PC-3 (cell line): ENCODE measurements at regions of chr17 and their contacts with region 1.

Region 1: GRCh38 chr17:65062143-65062915 is 5.8 kb upstream of the GNA13 start:
- DNase-seq: peak; percentile 57
- ATAC-seq: peak; percentile 50
- H3K4me3 ChIP-seq: no peak overlapping the region; the same call in 1 of the 2 replicates
- H3K27ac ChIP-seq: peak overlapping the region; percentile 25
- H3K4me1 ChIP-seq: peaks cover 38% of the 10 kb centered on the region
- H3K27me3 ChIP-seq: no peaks in the 10 kb centered on the region
- CTCF ChIP-seq: no peak

Region 2: DNA sequence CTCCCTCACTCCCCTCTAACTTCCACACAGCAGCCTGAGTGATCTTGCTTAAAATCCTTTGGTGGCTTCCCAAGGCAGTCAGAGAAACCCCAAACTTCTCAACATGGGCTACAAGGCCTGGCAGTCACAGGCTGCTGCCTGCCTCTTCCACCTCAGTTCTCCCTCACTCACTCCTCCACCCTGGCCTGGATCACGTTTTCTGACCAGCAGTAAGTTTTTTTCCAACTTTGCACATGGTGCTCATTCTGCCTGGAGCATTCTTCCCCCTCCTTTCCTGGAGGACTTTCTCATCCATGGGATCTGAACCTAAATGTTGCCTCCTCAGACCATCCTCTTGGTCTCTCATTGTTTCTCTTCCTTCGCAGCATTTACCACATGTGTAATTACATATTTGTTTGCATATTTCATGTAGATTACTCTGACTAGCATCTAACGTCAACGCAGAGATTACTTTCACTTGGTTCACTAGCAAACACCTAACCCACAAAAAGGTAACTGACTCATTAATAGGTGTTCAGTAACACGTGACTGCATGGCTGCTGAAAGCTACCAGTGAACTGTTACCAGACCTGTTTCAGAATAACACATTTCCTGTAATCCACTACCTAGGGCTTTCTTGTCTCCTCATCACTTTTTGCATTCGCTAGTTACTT is 22.9 kb before region 1 on chr17:
- CTCF ChIA-PET with region 1: no interaction called
- POLR2A ChIA-PET with region 1: interaction called, 28 read pairs
- intact Hi-C with region 1: no loop called
- DNase-seq: peak; percentile 86
- ATAC-seq: peak; percentile 92
- H3K4me3 ChIP-seq: 0 out of 2 replicates have a peak overlapping the region, but pooled peaks have one; percentile 4
- H3K27ac ChIP-seq: peak overlapping the region; percentile 49
- H3K4me1 ChIP-seq: peaks cover 22% of the 10 kb centered on the region
- H3K27me3 ChIP-seq: no peaks in the 10 kb centered on the region
- CTCF ChIP-seq: no peak

Region 3: DNA sequence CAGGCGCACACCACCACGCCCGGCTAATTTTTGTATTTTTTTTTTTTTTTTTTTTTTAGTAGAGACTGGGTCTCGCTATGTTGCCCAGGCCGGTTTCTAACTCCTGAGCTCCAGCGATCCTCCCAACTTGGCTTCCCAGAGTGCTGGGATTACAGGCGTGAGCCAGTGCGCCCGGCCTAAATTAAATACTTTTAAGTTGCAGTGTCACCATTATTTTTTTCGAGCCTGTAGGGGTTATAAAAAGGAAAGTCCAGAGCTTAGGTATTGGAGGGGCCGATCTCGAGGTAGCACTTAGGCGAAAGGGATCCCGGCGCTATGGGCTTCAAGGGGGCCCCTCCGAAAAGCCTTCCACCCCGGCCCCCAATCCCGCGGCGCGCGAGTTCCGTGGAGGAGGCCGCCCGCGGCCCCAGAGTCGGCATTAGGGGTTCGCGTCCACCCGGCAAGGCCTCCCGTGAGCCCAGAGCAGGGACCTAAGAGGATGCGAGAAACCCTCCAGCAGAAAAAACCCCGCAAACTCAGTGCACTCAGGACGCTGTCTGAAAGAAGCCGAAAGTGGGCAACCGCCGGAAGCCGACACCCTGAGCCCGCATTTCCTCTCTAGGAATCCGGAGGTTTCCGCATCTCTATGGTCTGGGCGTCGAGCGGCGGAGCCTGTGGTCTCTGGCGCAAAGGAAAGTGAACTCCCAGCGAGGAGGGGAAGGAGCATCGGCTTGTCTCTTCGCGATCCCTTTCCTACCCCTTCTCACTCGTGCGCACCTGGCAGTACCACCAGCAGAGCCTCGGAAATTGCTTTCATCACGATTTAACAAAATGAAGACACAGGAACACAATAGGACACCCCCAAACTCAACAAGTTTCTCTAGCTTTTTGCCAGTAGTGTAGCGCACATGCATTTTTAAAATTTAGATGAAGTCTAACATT is 60.8 kb after region 1 on chr17:
- CTCF ChIA-PET with region 1: no interaction called
- POLR2A ChIA-PET with region 1: interaction called, 14 read pairs
- intact Hi-C with region 1: loop called (anchors 5 kb)
- DNase-seq: peak; percentile 86
- ATAC-seq: peak; percentile 39
- H3K4me3 ChIP-seq: peak overlapping the region; percentile 50
- H3K27ac ChIP-seq: peak overlapping the region; percentile 91
- H3K4me1 ChIP-seq: peaks cover 33% of the 10 kb centered on the region
- H3K27me3 ChIP-seq: no peaks in the 10 kb centered on the region
- CTCF ChIP-seq: no peak